Gastrocnemius medialis (tissue), 4 donors: ENCODE measurements at regions of chr15 and their contacts with region 1.

Region 1: GRCh38 chr15:58749532-58750337 is at the start of gene ADAM10:
- DNase-seq: peak; percentile 98 to 99
- ATAC-seq: peak; percentile 94 to 95
- H3K4me3 ChIP-seq: peak within 1 kb of the TSS; percentile 75 to 98 (median 85)
- H3K27ac ChIP-seq: peak within 1 kb of the TSS; percentile 89 to 100 (median 96)
- H3K4me1 ChIP-seq: peaks cover 18 to 35% of the 10 kb centered on the region in 2 donors
- H3K27me3 ChIP-seq: no peaks in the 10 kb centered on the region
- CTCF ChIP-seq: peak in 1 of 5 experiments; percentile 10
- POLR2A ChIP-seq: peak; percentile 89 to 97
- total RNA-seq, gene ADAM10: 20.1 to 42.5 (median 33.4) TPM

Region 2: GRCh38 chr15:58269455-58270414 is 480.0 kb before region 1 on chr15:
- in situ Hi-C with region 1: no loop called
- intact Hi-C with region 1: loop called (anchors 5 kb)
- DNase-seq: peak in 1 of 2 donors; percentile 20
- ATAC-seq: peak; percentile 87 to 89
- H3K4me3 ChIP-seq: no peak overlapping the region
- H3K27ac ChIP-seq: no peak overlapping the region
- H3K4me1 ChIP-seq: no peaks in the 10 kb centered on the region
- H3K27me3 ChIP-seq: no peaks in the 10 kb centered on the region
- CTCF ChIP-seq: peak; percentile 40 to 77 (median 63)
- POLR2A ChIP-seq: no peak

Region 3: DNA sequence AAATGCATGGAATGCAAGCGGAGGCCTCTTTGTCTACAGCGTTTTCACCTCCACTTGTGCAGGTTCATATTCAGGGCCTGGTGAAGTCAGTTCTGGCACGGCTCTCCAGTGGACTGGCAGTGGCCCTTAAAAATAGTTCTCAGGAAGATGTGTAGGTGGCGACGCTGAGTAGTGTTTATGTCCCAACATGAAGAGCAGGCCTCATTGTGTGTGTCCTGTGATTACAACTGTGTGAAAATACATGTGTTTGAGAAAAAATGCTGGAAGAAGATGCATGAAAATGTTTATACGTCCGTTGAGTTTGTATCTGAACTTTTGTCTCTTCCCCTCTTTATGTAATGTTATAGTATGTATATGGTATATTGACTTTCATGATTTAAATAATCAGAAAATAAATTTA is 310.8 kb before region 1 on chr15:
- in situ Hi-C with region 1: no loop called
- intact Hi-C with region 1: loop called (anchors 5 kb)
- DNase-seq: peak in 1 of 2 donors; percentile 51
- ATAC-seq: peak; percentile 55 to 69
- H3K4me3 ChIP-seq: no peak overlapping the region
- H3K27ac ChIP-seq: peak overlapping the region in 3 of 4 donors; percentile 64 to 86 (median 75)
- H3K4me1 ChIP-seq: peaks cover 27 to 33% of the 10 kb centered on the region in 2 donors
- H3K27me3 ChIP-seq: no peaks in the 10 kb centered on the region
- CTCF ChIP-seq: peak in 2 of 5 experiments; percentile 13 to 18
- POLR2A ChIP-seq: no peak

Region 4: GRCh38 chr15:58521293-58521991 is 228.3 kb before region 1 on chr15:
- in situ Hi-C with region 1: no loop called
- intact Hi-C with region 1: loop called (anchors 10 kb)
- DNase-seq: peak; percentile 22 to 29
- ATAC-seq: no peak
- H3K4me3 ChIP-seq: no peak overlapping the region
- H3K27ac ChIP-seq: no peak overlapping the region
- H3K4me1 ChIP-seq: peaks cover 12 to 16% of the 10 kb centered on the region in 2 donors
- H3K27me3 ChIP-seq: no peaks in the 10 kb centered on the region
- CTCF ChIP-seq: no peak
- POLR2A ChIP-seq: no peak

Region 5: GRCh38 chr15:58690703-58691102 is 59.0 kb before region 1 on chr15:
- in situ Hi-C with region 1: no loop called
- intact Hi-C with region 1: no loop called
- DNase-seq: no peak
- ATAC-seq: no peak
- H3K4me3 ChIP-seq: no peak overlapping the region
- H3K27ac ChIP-seq: no peak overlapping the region
- H3K4me1 ChIP-seq: peaks cover 13 to 19% of the 10 kb centered on the region in 2 donors
- H3K27me3 ChIP-seq: no peaks in the 10 kb centered on the region
- CTCF ChIP-seq: no peak
- POLR2A ChIP-seq: no peak

Region 6: DNA sequence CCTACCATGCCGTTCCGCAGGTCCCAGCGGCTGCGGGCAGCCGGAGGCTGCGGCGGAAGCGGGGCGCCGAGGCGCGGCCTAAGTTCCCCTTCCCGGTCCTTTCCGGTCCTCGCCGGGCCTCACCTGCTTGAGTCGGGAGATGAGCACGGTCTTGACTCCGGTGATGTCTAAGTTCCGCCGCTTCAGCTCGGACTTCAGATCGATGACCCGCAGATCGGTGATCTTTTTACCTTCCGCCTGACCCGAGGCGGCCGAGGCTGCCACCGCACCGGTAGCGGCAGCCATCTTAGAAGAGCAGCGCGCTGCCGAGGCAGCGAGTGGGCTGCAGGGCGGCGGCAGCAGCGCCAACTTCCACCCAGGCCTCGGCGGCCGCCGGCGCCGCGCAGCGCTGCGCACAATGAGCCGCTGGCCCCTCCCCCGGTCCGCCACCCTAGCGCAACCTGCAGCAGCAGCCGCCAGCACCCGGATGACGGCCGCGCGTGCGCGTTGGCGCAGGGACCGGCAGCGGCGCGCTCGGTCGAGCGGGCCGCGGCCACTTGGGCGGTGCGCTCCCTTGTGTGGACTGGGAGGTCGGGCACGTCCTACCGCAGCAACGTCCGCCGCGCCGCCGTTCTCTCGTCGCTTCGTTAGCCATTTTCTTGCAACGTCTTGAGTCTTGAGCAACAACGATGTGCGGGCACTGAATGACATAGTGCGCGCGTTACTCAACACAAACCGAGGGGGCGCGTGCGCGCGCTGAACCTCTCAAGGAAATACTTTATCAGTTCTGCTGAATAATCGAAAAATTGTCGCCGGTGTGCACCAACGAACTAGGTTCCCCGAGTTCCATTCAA is 183.8 kb after region 1 on chr15 and contains the start of gene SLTM:
- in situ Hi-C with region 1: no loop called
- intact Hi-C with region 1: loop called (anchors 5 kb)
- DNase-seq: peak; percentile 85 to 94
- ATAC-seq: peak; percentile 87
- H3K4me3 ChIP-seq: peak within 1 kb of the TSS; percentile 73 to 95 (median 76)
- H3K27ac ChIP-seq: peak within 1 kb of the TSS; percentile 93 to 99 (median 96)
- H3K4me1 ChIP-seq: peaks cover 13 to 26% of the 10 kb centered on the region in 2 donors
- H3K27me3 ChIP-seq: no peaks in the 10 kb centered on the region
- CTCF ChIP-seq: peak in 4 of 5 experiments; percentile 13 to 43 (median 37)
- POLR2A ChIP-seq: peak; percentile 94 to 97
- total RNA-seq, gene SLTM: 46.5 to 76.2 (median 60.9) TPM